ENCODE measurements at regions of chr12 and their contacts with region 1.

Region 1: DNA sequence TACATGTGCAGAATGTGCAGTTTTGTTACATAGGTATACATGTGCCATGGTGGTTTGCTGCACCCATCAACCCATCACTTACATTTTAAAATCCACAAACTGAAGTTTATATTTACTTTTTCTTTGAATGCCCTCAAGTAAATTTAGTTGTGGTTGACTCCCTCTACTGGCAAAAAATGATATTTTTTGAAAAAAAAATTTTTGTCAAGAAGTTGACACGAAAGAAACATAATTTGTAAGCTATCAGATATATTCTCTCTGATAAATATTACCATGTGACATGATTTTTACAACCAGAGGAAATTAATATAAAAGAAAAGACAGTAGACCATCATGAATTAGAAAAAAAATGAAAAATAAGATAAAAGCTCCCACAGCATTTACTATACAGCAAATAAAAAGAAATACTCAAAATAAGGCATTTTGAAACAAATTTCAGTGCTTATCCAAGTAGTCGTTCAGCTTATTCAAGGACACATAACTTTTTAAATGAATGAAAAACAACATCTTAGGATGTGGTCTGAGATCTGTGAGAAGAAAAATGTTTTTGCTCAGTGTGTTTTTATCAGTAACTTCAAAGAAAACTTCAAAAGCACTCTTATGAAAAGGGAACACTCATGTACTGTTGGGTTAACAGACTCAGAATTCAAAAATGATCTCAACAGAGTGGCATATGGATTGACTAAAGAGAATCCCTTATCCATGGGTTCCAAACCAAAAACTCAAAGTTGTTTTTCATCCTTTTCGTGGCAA is 30.0 kb upstream of the GRIP1 start:
- DNase-seq: peak in 6 of 9 donors; percentile 54 to 77 (median 65)
- ATAC-seq: peak; percentile 86
- H3K4me3 ChIP-seq: no peak overlapping the region
- H3K4me3 Mint-ChIP-seq: peak overlapping the region; percentile 18 to 84 (median 71)
- H3K27ac ChIP-seq: peak overlapping the region; percentile 45
- H3K27ac Mint-ChIP-seq: peak overlapping the region in 8 of 9 donors; percentile 40 to 95 (median 91)
- H3K4me1 ChIP-seq: peaks cover 0 to 29% of the 10 kb centered on the region in 2 donors
- H3K4me1 Mint-ChIP-seq: peaks cover 9 to 65% (median 51%) of the 10 kb centered on the region in 7 donors
- H3K27me3 ChIP-seq: no peaks in the 10 kb centered on the region
- H3K27me3 Mint-ChIP-seq: peaks cover 0 to 36% (median 0%) of the 10 kb centered on the region in 5 donors

Region 2: GRCh38 chr12:66693901-66694675 is 14.8 kb before region 1 on chr12:
- CTCF ChIA-PET with region 1: interaction called, 6 read pairs
- POLR2A ChIA-PET with region 1: no interaction called
- intact Hi-C with region 1: loop called in 1 of 2 experiments (anchors 1 kb)
- DNase-seq: peak in 7 of 9 donors; percentile 25 to 57 (median 50)
- ATAC-seq: peak; percentile 89
- H3K4me3 ChIP-seq: no peak overlapping the region
- H3K4me3 Mint-ChIP-seq: no peak overlapping the region
- H3K27ac ChIP-seq: no peak overlapping the region
- H3K27ac Mint-ChIP-seq: no peak overlapping the region
- H3K4me1 ChIP-seq: no peaks in the 10 kb centered on the region
- H3K4me1 Mint-ChIP-seq: peaks cover 3 to 24% (median 18%) of the 10 kb centered on the region in 7 donors
- H3K27me3 ChIP-seq: no peaks in the 10 kb centered on the region
- H3K27me3 Mint-ChIP-seq: peaks cover 0 to 8% (median 0%) of the 10 kb centered on the region in 5 donors

Region 3: DNA sequence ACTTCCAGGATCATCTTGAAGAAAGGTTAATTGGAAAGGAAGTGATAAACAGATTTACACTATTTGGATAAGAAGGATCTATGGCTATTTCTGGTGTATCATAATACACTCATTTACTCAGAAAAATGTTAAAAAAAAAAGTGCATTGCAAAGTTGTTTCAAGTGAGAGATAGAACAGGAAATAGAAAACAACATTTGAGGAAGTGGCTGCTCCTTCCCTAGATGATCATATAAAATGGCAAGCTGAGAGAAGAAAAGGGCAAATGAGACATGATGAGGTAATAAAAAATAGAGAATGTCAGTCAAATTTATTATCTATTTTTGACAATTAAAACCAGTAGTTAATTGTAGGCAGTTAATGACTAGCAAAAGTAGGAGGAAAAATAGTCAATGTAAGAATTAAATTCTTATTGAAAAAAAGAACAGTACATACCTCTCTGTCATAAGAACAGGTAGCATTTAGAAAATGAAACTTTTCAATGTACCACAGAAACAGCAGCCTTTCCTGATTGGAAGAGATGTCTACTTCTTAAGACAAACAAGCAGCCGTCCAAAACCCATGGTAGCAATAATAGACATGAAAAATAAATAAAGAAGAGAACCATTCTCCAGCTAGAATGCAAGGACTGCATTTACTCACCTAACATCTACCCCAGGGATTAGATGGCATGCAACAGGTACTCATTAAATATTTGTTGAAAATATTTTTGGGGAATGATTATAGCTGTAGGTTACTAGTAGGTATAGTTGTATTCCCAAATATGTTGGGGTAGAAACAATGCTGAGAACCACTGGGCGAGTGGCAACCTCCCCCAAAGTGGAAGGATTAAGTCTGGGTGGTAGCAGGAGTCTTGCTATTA is 33.9 kb after region 1 on chr12:
- CTCF ChIA-PET with region 1: interaction called, 3 read pairs
- POLR2A ChIA-PET with region 1: no interaction called
- intact Hi-C with region 1: loop called in 1 of 2 experiments (anchors 2 kb)
- DNase-seq: peak in 6 of 9 donors; percentile 4 to 38 (median 25)
- ATAC-seq: no peak
- H3K4me3 ChIP-seq: no peak overlapping the region
- H3K4me3 Mint-ChIP-seq: peak overlapping the region in 8 of 10 donors; percentile 3 to 74 (median 38)
- H3K27ac ChIP-seq: no peak overlapping the region
- H3K27ac Mint-ChIP-seq: peak overlapping the region in 8 of 9 donors; percentile 7 to 83 (median 60)
- H3K4me1 ChIP-seq: peaks cover 4 to 17% of the 10 kb centered on the region in 2 donors
- H3K4me1 Mint-ChIP-seq: peaks cover 7 to 30% (median 24%) of the 10 kb centered on the region in 7 donors
- H3K27me3 ChIP-seq: no peaks in the 10 kb centered on the region
- H3K27me3 Mint-ChIP-seq: peaks cover 0 to 19% (median 0%) of the 10 kb centered on the region in 5 donors

Region 4: GRCh38 chr12:66765204-66765603 is 56.3 kb after region 1 on chr12:
- CTCF ChIA-PET with region 1: no interaction called
- POLR2A ChIA-PET with region 1: interaction called, 5 read pairs
- intact Hi-C with region 1: loop called in 1 of 2 experiments (anchors 2 kb)
- DNase-seq: no peak
- ATAC-seq: no peak
- H3K4me3 ChIP-seq: no peak overlapping the region
- H3K4me3 Mint-ChIP-seq: peak overlapping the region in 8 of 10 donors; percentile 13 to 63 (median 44)
- H3K27ac ChIP-seq: peak overlapping the region; percentile 41
- H3K27ac Mint-ChIP-seq: peak overlapping the region in 8 of 9 donors; percentile 11 to 84 (median 70)
- H3K4me1 ChIP-seq: peaks cover 0 to 32% of the 10 kb centered on the region in 2 donors
- H3K4me1 Mint-ChIP-seq: peaks cover 12 to 51% (median 37%) of the 10 kb centered on the region in 7 donors
- H3K27me3 ChIP-seq: no peaks in the 10 kb centered on the region
- H3K27me3 Mint-ChIP-seq: peaks cover 0 to 39% (median 0%) of the 10 kb centered on the region in 5 donors

Region 5: DNA sequence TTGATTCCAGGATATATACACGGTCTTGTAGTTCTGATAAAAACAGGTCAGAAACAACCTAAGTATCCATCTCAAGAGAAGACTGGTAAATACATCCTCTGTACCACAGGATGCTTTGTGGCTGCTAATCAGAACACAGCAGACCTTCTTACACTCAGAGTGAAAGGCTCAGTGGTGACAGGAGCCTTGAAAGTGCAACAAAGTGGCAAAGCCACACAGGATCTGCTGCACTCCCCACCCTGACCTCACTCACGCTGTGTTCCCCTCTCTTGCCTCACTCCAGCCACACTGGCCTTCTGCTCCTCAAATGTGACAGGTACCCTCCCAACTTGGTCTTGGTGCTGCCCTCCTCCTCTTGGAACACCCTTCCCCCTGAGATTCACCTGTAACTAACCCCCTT is 68.1 kb after region 1 on chr12:
- CTCF ChIA-PET with region 1: no interaction called
- POLR2A ChIA-PET with region 1: no interaction called
- intact Hi-C with region 1: loop called (anchors 2 to 5 kb)
- DNase-seq: peak in 7 of 9 donors; percentile 16 to 63 (median 50)
- ATAC-seq: peak; percentile 91
- H3K4me3 ChIP-seq: no peak overlapping the region
- H3K4me3 Mint-ChIP-seq: peak overlapping the region; percentile 5 to 80 (median 63)
- H3K27ac ChIP-seq: no peak overlapping the region
- H3K27ac Mint-ChIP-seq: peak overlapping the region; percentile 78 to 91 (median 87)
- H3K4me1 ChIP-seq: peaks cover 10 to 17% of the 10 kb centered on the region in 2 donors
- H3K4me1 Mint-ChIP-seq: peaks cover 16 to 38% (median 24%) of the 10 kb centered on the region in 7 donors
- H3K27me3 ChIP-seq: no peaks in the 10 kb centered on the region
- H3K27me3 Mint-ChIP-seq: peaks cover 0 to 70% (median 0%) of the 10 kb centered on the region in 5 donors

Measured in naive thymus-derived CD4-positive, alpha-beta T cell (primary cell).